ENCODE measurements at regions of chr5 and their contacts with region 1.

Region 1: DNA sequence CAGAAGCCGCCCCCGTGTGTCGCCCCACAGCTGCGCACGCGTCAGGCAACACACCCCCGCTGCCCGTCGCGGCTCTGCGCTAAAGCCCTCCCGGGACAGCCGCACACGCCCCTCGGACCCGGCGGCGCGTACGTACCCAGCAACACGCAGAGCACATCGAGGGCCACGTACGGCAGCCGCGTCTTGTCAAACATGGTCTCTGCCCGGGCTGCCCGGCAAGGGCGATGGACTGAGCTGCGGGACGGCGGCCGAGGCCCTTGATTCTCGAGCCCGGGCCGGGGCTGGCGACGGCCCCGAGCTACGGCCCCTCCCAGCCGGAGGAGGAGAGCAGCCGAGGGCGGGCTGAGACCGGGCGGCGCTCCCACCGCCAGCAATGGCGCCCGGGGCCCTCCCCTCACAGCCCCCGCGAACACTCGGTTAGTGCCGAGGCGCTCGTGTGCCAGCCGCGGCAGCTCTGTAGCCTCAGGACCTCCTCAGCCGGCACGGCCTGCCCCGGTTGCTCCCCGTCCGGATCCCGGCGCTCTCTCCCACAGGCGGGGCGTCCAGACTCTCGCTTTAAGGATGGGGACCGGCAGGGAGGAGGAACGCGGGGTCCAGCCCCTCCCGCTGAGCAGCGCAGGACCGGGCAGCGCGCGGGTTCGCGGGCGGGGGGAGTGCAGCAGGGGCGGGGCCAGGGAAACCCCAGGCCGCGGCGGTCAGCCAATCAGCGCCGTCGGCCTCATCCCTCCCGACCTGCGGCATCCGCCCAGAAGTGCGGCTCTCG is at the start of gene PLPP1:
- DNase-seq: peak; percentile 96
- H3K4me3 ChIP-seq: peak within 1 kb of the TSS; percentile 83 to 95 (median 93)
- H3K27ac ChIP-seq: peak within 1 kb of the TSS; percentile 96 to 98 (median 97)
- H3K4me1 ChIP-seq: peaks cover 24 to 49% (median 47%) of the 10 kb centered on the region in 4 donors
- H3K27me3 ChIP-seq: no peaks in the 10 kb centered on the region
- CTCF ChIP-seq: no peak
- EP300 ChIP-seq: no peak
- POLR2A ChIP-seq: no peak
- total RNA-seq, gene PLPP1: 186 to 306 (median 241) TPM

Region 2: GRCh38 chr5:55160493-55161209 is 374.0 kb before region 1 on chr5:
- intact Hi-C with region 1: no loop called
- DNase-seq: peak; percentile 93
- H3K4me3 ChIP-seq: peak overlapping the region; percentile 41 to 62 (median 50)
- H3K27ac ChIP-seq: peak overlapping the region; percentile 56 to 68 (median 65)
- H3K4me1 ChIP-seq: peaks cover 4 to 13% (median 7%) of the 10 kb centered on the region in 4 donors
- H3K27me3 ChIP-seq: peaks cover 0 to 3% (median 0%) of the 10 kb centered on the region in 4 donors
- CTCF ChIP-seq: no peak
- EP300 ChIP-seq: no peak
- POLR2A ChIP-seq: no peak

Region 3: GRCh38 chr5:55407059-55407684 is 127.4 kb before region 1 on chr5:
- intact Hi-C with region 1: loop called (anchors 5 kb)
- DNase-seq: no peak
- H3K4me3 ChIP-seq: no peak overlapping the region
- H3K27ac ChIP-seq: no peak overlapping the region
- H3K4me1 ChIP-seq: peaks cover 0 to 7% (median 3%) of the 10 kb centered on the region in 4 donors
- H3K27me3 ChIP-seq: no peaks in the 10 kb centered on the region
- CTCF ChIP-seq: peak; percentile 64 to 77 (median 69)
- EP300 ChIP-seq: no peak
- POLR2A ChIP-seq: no peak

Region 4: DNA sequence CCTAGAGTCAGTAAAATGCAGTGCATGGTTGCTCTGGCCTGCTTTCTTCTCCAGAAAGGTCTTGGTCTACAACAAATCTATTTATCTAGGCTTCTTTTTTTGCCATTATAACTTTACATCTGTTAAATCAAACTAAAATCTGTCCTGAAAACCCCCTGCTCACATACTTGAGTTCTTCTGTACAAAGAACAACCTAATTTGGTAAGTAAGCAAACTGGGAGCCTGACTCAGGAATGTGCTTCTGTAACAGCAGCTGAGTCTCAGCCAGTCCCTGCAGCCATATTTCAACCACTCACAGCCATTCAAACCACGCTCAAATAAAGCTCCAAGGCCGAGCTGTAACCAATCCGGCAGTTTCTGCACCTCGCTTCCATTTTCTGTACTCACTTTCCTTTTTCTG is 95.6 kb before region 1 on chr5:
- intact Hi-C with region 1: loop called (anchors 5 kb)
- DNase-seq: no peak
- H3K4me3 ChIP-seq: no peak overlapping the region
- H3K27ac ChIP-seq: peak overlapping the region; percentile 88 to 89 (median 88)
- H3K4me1 ChIP-seq: peaks cover 54 to 76% (median 69%) of the 10 kb centered on the region in 4 donors
- H3K27me3 ChIP-seq: no peaks in the 10 kb centered on the region
- CTCF ChIP-seq: no peak
- EP300 ChIP-seq: no peak
- POLR2A ChIP-seq: no peak

Region 5: DNA sequence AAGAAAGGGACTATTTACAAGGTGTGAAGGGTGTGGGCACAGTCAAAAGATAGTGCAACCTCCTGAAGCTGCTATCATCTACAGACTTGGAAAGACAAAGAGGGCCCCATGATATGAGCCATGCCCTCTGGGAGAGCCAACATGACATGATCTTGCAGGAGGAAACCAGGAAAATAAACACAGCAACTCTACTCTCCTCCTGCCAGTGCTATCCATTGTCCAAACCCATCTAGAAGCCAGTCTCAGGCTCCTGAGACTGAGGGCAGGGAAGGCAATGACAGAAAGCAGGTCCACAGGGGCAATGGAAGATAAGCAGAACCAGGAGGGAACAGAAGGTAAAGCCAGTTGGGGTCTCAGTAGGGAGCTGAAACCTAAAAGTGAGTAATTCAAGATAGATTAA is 36.9 kb before region 1 on chr5:
- intact Hi-C with region 1: no loop called
- DNase-seq: no peak
- H3K4me3 ChIP-seq: no peak overlapping the region
- H3K27ac ChIP-seq: no peak overlapping the region
- H3K4me1 ChIP-seq: peaks cover 23 to 58% (median 44%) of the 10 kb centered on the region in 4 donors
- H3K27me3 ChIP-seq: no peaks in the 10 kb centered on the region
- CTCF ChIP-seq: no peak
- EP300 ChIP-seq: no peak
- POLR2A ChIP-seq: no peak

Region 6: DNA sequence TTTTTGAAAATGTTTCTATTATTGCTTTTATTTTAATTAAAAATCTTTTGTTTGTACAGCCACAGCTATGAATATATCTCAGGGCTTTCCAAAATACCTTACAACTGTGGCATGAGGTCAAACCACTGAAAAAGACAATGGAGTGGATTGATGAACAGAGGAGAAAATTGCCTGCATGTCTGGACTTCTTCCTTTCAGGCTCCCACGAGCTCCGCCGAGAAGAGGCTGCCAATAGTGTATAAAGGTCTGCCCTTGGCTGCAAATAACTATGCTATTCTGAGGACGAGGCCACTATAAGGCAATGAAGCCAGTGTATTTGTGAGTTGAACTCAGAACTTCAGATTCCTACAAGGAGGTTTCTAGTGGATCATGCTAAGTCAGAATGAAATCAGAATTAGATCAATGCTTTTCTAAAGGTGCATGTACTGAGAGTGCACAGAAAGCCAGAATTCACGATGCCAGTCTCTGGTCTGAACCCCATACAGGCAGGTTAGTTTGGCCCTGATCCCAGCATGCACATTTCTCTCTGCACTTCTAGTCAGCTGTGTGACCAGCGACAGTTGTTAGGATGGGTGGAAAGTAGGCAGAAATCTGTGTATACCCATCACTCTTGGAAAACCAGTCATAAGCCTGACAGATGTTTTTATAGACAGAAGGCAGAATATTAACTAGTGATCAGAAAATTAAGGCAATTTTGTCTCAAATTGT is 42.9 kb after region 1 on chr5:
- intact Hi-C with region 1: no loop called
- DNase-seq: no peak
- H3K4me3 ChIP-seq: no peak overlapping the region
- H3K27ac ChIP-seq: peak overlapping the region; percentile 40 to 71 (median 56)
- H3K4me1 ChIP-seq: peaks cover 33 to 41% (median 36%) of the 10 kb centered on the region in 4 donors
- H3K27me3 ChIP-seq: no peaks in the 10 kb centered on the region
- CTCF ChIP-seq: no peak
- EP300 ChIP-seq: no peak
- POLR2A ChIP-seq: no peak

Region 7: GRCh38 chr5:55601204-55601618 is 66.6 kb after region 1 on chr5:
- intact Hi-C with region 1: loop called (anchors 2 kb)
- DNase-seq: peak; percentile 96
- H3K4me3 ChIP-seq: peak overlapping the region in 3 of 4 donors; percentile 9 to 24 (median 19)
- H3K27ac ChIP-seq: peak overlapping the region; percentile 84 to 93 (median 88)
- H3K4me1 ChIP-seq: peaks cover 76 to 85% (median 83%) of the 10 kb centered on the region in 4 donors
- H3K27me3 ChIP-seq: no peaks in the 10 kb centered on the region
- CTCF ChIP-seq: no peak
- EP300 ChIP-seq: peak; percentile 78
- POLR2A ChIP-seq: no peak

Region 8: DNA sequence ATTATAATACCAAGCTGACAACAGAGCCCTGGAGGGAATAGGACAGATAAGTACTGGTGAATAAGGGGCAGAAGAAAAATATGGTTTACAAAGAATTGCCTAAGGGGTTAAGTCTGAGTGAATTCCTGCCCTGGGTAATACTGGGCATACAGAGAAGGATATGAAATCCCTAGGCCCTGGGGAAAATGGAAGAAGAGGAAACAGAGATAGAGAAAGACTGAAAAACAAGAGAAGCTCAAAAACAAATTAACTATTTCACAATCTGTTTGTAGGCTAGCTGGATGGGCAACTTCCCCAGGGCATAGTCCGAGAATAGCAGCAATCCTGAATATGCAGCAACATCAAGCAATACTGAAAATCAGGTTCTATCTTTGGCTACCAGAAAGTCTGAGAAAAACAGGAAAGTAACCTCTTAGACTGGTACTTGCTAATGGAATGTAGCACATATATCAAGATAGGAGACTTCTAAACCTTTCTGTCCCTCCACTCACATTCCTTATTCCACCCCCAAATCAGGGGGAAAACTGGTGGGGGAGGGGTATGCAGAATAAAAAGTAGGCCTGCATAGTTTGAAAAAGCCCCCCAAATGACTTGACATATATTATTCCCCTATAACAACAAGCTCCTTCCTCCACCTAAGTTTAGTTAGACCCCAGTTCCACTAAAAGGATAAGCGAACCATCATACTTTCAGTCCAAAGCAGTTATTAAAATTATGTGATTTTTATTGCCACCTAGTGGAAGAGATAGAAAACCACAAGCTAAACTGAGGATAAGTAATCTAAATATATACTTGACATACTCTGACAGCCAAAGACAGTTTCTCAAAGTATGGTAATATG is 156.9 kb after region 1 on chr5:
- intact Hi-C with region 1: loop called (anchors 5 kb)
- DNase-seq: no peak
- H3K4me3 ChIP-seq: peak overlapping the region in 3 of 4 donors; percentile 4 to 25 (median 18)
- H3K27ac ChIP-seq: peak overlapping the region; percentile 24 to 51 (median 42)
- H3K4me1 ChIP-seq: peaks cover 15 to 27% (median 22%) of the 10 kb centered on the region in 4 donors
- H3K27me3 ChIP-seq: no peaks in the 10 kb centered on the region
- CTCF ChIP-seq: peak; percentile 71 to 78 (median 72)
- EP300 ChIP-seq: no peak
- POLR2A ChIP-seq: no peak

Region 9: DNA sequence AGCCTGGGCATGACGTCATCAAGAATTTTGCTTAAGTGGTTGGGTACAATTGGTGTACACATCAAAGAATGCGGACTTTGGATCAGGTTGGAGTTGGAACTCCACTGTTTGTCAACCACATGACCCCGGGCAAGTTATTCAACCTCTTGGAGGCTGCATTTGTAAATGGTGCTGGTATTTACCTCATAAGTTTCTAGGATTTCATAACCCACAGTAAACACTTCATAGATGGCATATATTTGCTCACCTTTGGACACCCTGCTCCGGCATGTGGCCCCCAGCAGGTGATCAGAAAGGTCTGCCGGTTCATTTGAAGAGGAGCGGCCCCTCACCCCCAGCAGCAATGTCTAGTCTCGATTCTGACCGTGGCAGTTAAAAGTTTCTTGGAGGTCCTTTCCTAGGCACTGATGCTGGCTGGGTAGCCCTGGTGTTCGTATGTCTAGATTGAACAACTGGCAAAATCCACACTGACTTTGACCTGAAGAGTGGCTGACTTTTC is 399.5 kb after region 1 on chr5:
- intact Hi-C with region 1: no loop called
- DNase-seq: no peak
- H3K4me3 ChIP-seq: no peak overlapping the region
- H3K27ac ChIP-seq: no peak overlapping the region
- H3K4me1 ChIP-seq: peaks cover 0 to 10% (median 5%) of the 10 kb centered on the region in 4 donors
- H3K27me3 ChIP-seq: no peaks in the 10 kb centered on the region
- CTCF ChIP-seq: no peak
- EP300 ChIP-seq: no peak
- POLR2A ChIP-seq: no peak